ENCODE measurements at regions of chr1 and their contacts with region 1.

Region 1: GRCh38 chr1:5992026-5992813 is at the start of gene NPHP4:
- DNase-seq: peak; percentile 99
- ATAC-seq: peak; percentile 90
- H3K4me3 ChIP-seq: peak within 1 kb of the TSS; percentile 31 to 91 (median 75)
- H3K4me3 Mint-ChIP-seq: peak within 1 kb of the TSS; percentile 98
- H3K27ac ChIP-seq: peak within 1 kb of the TSS; percentile 71 to 99
- H3K27ac Mint-ChIP-seq: peak within 1 kb of the TSS; percentile 95
- H3K4me1 ChIP-seq: peaks cover 28 to 33% of the 10 kb centered on the region in 2 donors
- H3K4me1 Mint-ChIP-seq: peaks cover 28% of the 10 kb centered on the region
- H3K27me3 ChIP-seq: no peaks in the 10 kb centered on the region
- H3K27me3 Mint-ChIP-seq: no peaks in the 10 kb centered on the region
- CTCF ChIP-seq: no peak
- total RNA-seq, gene NPHP4: 12.3 and 14.8 TPM in 2 replicates

Region 2: GRCh38 chr1:5888606-5889211 is 103.5 kb before region 1 on chr1:
- CTCF ChIA-PET with region 1: no interaction called
- POLR2A ChIA-PET with region 1: no interaction called
- intact Hi-C with region 1: no loop called
- DNase-seq: no peak
- ATAC-seq: no peak
- H3K4me3 ChIP-seq: no peak overlapping the region
- H3K4me3 Mint-ChIP-seq: no peak overlapping the region
- H3K27ac ChIP-seq: no peak overlapping the region
- H3K27ac Mint-ChIP-seq: no peak overlapping the region
- H3K4me1 ChIP-seq: no peaks in the 10 kb centered on the region
- H3K4me1 Mint-ChIP-seq: no peaks in the 10 kb centered on the region
- H3K27me3 ChIP-seq: no peaks in the 10 kb centered on the region
- H3K27me3 Mint-ChIP-seq: no peaks in the 10 kb centered on the region
- CTCF ChIP-seq: no peak

Region 3: GRCh38 chr1:5976726-5977493 is 15.3 kb before region 1 on chr1:
- CTCF ChIA-PET with region 1: no interaction called
- POLR2A ChIA-PET with region 1: no interaction called
- intact Hi-C with region 1: no loop called
- DNase-seq: no peak
- ATAC-seq: no peak
- H3K4me3 ChIP-seq: no peak overlapping the region
- H3K4me3 Mint-ChIP-seq: no peak overlapping the region
- H3K27ac ChIP-seq: no peak overlapping the region
- H3K27ac Mint-ChIP-seq: no peak overlapping the region
- H3K4me1 ChIP-seq: peaks cover 5 to 7% of the 10 kb centered on the region in 2 donors
- H3K4me1 Mint-ChIP-seq: peaks cover 15% of the 10 kb centered on the region
- H3K27me3 ChIP-seq: no peaks in the 10 kb centered on the region
- H3K27me3 Mint-ChIP-seq: no peaks in the 10 kb centered on the region
- CTCF ChIP-seq: no peak

Region 4: GRCh38 chr1:6007318-6008083 is 15.3 kb after region 1 on chr1:
- CTCF ChIA-PET with region 1: no interaction called
- POLR2A ChIA-PET with region 1: no interaction called
- intact Hi-C with region 1: no loop called
- DNase-seq: no peak
- ATAC-seq: no peak
- H3K4me3 ChIP-seq: no peak overlapping the region
- H3K4me3 Mint-ChIP-seq: no peak overlapping the region
- H3K27ac ChIP-seq: no peak overlapping the region
- H3K27ac Mint-ChIP-seq: no peak overlapping the region
- H3K4me1 ChIP-seq: no peaks in the 10 kb centered on the region
- H3K4me1 Mint-ChIP-seq: peaks cover 16% of the 10 kb centered on the region
- H3K27me3 ChIP-seq: no peaks in the 10 kb centered on the region
- H3K27me3 Mint-ChIP-seq: no peaks in the 10 kb centered on the region
- CTCF ChIP-seq: no peak

Region 5: DNA sequence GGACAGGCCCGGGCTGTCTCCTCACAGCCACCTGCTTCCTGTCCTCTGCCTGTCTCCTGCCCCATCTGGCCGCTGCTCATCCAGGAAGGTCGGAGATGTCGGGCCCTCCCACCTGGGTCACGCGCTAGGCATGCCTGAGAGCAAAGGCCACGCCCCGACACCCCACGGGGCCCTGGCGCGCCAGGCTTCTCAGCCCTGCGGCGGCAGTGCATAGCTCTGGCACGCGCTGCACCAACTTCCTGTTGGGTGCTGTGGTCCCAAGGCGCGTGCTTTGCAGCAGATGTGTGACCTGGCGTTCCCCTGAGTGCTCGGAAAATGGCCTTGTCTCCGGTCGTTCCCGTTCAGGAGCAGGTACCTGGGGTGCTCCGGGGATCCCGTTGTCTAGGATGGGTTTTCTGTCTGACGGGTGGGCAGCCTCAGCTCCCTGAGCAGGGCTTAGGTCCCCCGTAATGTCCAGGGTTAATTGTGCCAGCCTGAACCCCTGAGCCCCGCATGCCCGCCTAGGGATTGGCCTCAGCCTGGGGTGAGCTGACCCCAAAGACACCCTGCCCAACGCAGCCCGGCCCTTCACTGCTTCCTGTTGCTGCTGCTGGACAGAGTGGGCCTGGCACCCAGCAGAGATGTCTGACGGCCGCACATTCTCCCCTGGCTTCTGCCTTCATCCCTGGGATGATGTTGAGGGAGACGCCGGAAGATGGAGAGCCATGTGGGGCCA is 34.0 kb after region 1 on chr1:
- CTCF ChIA-PET with region 1: interaction called, 13 read pairs
- POLR2A ChIA-PET with region 1: interaction called, 26 read pairs
- intact Hi-C with region 1: loop called (anchors 1 kb)
- DNase-seq: peak; percentile 97
- ATAC-seq: peak; percentile 89
- H3K4me3 ChIP-seq: peak overlapping the region; percentile 11 to 71 (median 65)
- H3K4me3 Mint-ChIP-seq: peak overlapping the region; percentile 86
- H3K27ac ChIP-seq: peak overlapping the region; percentile 96
- H3K27ac Mint-ChIP-seq: peak overlapping the region; percentile 93
- H3K4me1 ChIP-seq: peaks cover 54 to 60% of the 10 kb centered on the region in 2 donors
- H3K4me1 Mint-ChIP-seq: peaks cover 60% of the 10 kb centered on the region
- H3K27me3 ChIP-seq: no peaks in the 10 kb centered on the region
- H3K27me3 Mint-ChIP-seq: no peaks in the 10 kb centered on the region
- CTCF ChIP-seq: no peak

Region 6: GRCh38 chr1:6220241-6220640 is 228.0 kb after region 1 on chr1:
- CTCF ChIA-PET with region 1: no interaction called
- POLR2A ChIA-PET with region 1: no interaction called
- intact Hi-C with region 1: no loop called
- DNase-seq: no peak
- ATAC-seq: no peak
- H3K4me3 ChIP-seq: no peak overlapping the region
- H3K4me3 Mint-ChIP-seq: no peak overlapping the region
- H3K27ac ChIP-seq: no peak overlapping the region
- H3K27ac Mint-ChIP-seq: no peak overlapping the region
- H3K4me1 ChIP-seq: no peaks in the 10 kb centered on the region
- H3K4me1 Mint-ChIP-seq: no peaks in the 10 kb centered on the region
- H3K27me3 ChIP-seq: peaks cover 0 to 8% (median 0%) of the 10 kb centered on the region in 4 experiments
- H3K27me3 Mint-ChIP-seq: peaks cover 19% of the 10 kb centered on the region
- CTCF ChIP-seq: no peak

Region 7: DNA sequence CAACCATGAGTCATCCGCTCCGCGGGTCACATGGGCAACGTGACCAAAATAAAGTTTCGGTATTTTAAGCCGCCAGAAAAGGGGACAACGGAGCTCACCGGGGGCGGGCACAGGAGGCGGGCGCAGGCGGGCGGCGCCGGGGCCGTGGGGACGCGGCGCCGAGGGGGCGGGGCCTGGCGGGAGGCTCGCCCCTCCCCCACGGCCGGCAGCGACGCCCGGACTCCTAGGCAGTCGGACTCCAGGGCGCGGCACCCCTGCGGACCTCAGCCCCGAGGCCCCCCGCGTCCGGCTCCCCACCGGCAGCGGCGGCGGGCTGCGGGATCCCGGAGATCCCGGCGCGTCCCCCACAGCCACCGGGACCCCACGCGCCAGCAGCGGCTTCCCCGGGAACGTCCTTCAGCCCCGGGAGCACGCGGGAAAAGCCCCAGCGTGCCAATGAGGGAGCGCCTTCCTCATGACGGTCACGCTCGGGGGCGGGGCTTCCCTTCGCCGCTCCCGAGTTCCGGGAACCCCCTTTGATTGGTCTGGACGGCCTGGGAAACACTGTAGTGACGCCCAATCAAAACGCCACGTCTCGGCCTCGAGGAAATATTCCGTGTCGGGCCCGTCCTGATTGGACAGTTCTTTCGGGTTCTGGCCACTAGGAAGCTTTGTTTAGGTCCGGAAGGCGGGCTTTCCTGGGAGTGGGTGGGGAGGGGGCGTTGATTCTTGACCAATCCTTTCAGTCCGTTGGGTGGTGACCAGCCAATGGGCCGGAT is 792.5 kb after region 1 on chr1:
- CTCF ChIA-PET with region 1: no interaction called
- POLR2A ChIA-PET with region 1: no interaction called
- intact Hi-C with region 1: loop called (anchors 10 kb)
- DNase-seq: peak; percentile 100
- ATAC-seq: peak; percentile 78
- H3K4me3 ChIP-seq: peak overlapping the region; percentile 66 to 84 (median 77)
- H3K4me3 Mint-ChIP-seq: peak overlapping the region; percentile 95
- H3K27ac ChIP-seq: peak overlapping the region; percentile 87 to 99
- H3K27ac Mint-ChIP-seq: peak overlapping the region; percentile 97
- H3K4me1 ChIP-seq: peaks cover 15 to 18% of the 10 kb centered on the region in 2 donors
- H3K4me1 Mint-ChIP-seq: peaks cover 51% of the 10 kb centered on the region
- H3K27me3 ChIP-seq: no peaks in the 10 kb centered on the region
- H3K27me3 Mint-ChIP-seq: no peaks in the 10 kb centered on the region
- CTCF ChIP-seq: no peak

Region 8: GRCh38 chr1:7783826-7784491 is 1791.7 kb after region 1 on chr1 and contains the start of gene PER3:
- CTCF ChIA-PET with region 1: no interaction called
- POLR2A ChIA-PET with region 1: no interaction called
- intact Hi-C with region 1: loop called (anchors 10 kb)
- DNase-seq: peak; percentile 96
- ATAC-seq: peak; percentile 85
- H3K4me3 ChIP-seq: peak within 1 kb of the TSS in 4 of 5 experiments; percentile 26 to 69 (median 62)
- H3K4me3 Mint-ChIP-seq: peak within 1 kb of the TSS; percentile 80
- H3K27ac ChIP-seq: peak within 1 kb of the TSS; percentile 39 to 87
- H3K27ac Mint-ChIP-seq: peak within 1 kb of the TSS; percentile 68
- H3K4me1 ChIP-seq: peaks cover 8 to 22% of the 10 kb centered on the region in 2 donors
- H3K4me1 Mint-ChIP-seq: peaks cover 21% of the 10 kb centered on the region
- H3K27me3 ChIP-seq: no peaks in the 10 kb centered on the region
- H3K27me3 Mint-ChIP-seq: no peaks in the 10 kb centered on the region
- CTCF ChIP-seq: no peak
- total RNA-seq, gene PER3: 5.8 and 8.5 TPM in 2 replicates

Measured in B cell (primary cell).